ENCODE measurements at regions of chr16 and their contacts with region 1.

Region 1: GRCh38 chr16:21083729-21084268 is 66.8 kb downstream of the DNAH3 start:
- DNase-seq: peak; percentile 72
- H3K4me3 Mint-ChIP-seq: no peak overlapping the region
- H3K27ac Mint-ChIP-seq: no peak overlapping the region
- H3K4me1 Mint-ChIP-seq: no peaks in the 10 kb centered on the region
- H3K27me3 Mint-ChIP-seq: peaks cover 10% of the 10 kb centered on the region

Region 2: GRCh38 chr16:20799599-20799998 is 284.2 kb before region 1 on chr16:
- CTCF ChIA-PET with region 1: interaction called, 10 read pairs
- DNase-seq: no peak
- H3K4me3 Mint-ChIP-seq: no peak overlapping the region
- H3K27ac Mint-ChIP-seq: no peak overlapping the region
- H3K4me1 Mint-ChIP-seq: peaks cover 19% of the 10 kb centered on the region
- H3K27me3 Mint-ChIP-seq: no peaks in the 10 kb centered on the region

Region 3: GRCh38 chr16:20844588-20844987 is 239.2 kb before region 1 on chr16:
- CTCF ChIA-PET with region 1: interaction called, 30 read pairs
- DNase-seq: peak; percentile 55
- H3K4me3 Mint-ChIP-seq: no peak overlapping the region
- H3K27ac Mint-ChIP-seq: peak overlapping the region; percentile 76
- H3K4me1 Mint-ChIP-seq: peaks cover 28% of the 10 kb centered on the region
- H3K27me3 Mint-ChIP-seq: no peaks in the 10 kb centered on the region

Region 4: GRCh38 chr16:21033704-21034103 is 50.1 kb before region 1 on chr16:
- CTCF ChIA-PET with region 1: no interaction called
- DNase-seq: no peak
- H3K4me3 Mint-ChIP-seq: no peak overlapping the region
- H3K27ac Mint-ChIP-seq: no peak overlapping the region
- H3K4me1 Mint-ChIP-seq: no peaks in the 10 kb centered on the region
- H3K27me3 Mint-ChIP-seq: peaks cover 28% of the 10 kb centered on the region

Region 5: DNA sequence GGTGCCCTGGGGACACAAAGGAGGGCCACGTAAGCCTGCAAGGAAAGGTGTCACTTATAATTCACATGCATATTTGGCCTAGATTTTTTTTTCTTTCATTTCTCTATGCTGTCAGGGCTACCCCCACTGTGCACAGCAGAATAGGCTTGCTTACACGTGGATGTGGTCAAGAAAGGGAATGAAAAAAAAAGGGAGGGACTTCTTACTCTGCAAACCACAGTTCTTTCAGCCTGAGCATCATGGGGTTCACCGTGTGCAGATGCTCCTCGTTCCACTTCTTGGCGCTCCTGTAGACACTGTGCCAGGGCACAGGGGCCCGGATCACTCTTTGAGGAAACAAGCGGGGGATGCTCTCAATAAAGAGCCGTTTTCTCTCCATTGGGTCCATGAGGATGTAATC is 50.3 kb after region 1 on chr16:
- CTCF ChIA-PET with region 1: no interaction called
- DNase-seq: no peak
- H3K4me3 Mint-ChIP-seq: no peak overlapping the region
- H3K27ac Mint-ChIP-seq: no peak overlapping the region
- H3K4me1 Mint-ChIP-seq: no peaks in the 10 kb centered on the region
- H3K27me3 Mint-ChIP-seq: no peaks in the 10 kb centered on the region

Measured in activated naive CD4-positive, alpha-beta T cell treated with anti-CD3 and anti-CD28 coated beads, Interleukin-2, amount 10 ng/mL, durations not matched to agents 7 days and 5 days (primary cell).